Activated naive CD4-positive, alpha-beta T cell treated with anti-CD3 and anti-CD28 coated beads, Interleukin-2, amount 10 ng/mL, durations not matched to agents 7 days and 5 days (primary cell): ENCODE measurements at regions of chr6 and their contacts with region 1.

Region 1: DNA sequence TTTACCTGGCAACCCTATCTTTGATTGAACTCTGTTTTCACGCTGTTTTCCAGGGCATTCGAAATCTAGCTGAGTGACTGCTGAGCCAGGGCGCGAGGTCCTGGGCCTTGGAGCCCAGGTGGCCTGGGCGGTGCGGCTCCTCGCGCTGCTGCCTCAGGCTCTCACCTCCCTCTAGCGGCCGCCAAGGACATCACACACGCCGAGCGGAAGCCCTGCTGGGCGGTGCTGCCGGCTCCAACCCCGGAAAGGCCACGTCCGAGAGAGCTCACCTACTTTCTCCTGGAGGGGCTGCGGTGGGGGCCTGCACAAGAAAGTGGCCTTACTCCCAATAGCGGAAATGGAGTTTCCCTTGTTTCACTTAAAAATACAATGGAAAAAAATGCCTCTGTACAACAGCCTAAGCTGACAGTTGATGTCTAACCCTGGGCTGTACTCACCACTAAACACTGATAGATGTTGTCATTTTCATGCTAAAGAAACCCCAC is 77.7 kb downstream of the ELOVL4 start:
- DNase-seq: peak; percentile 86
- H3K4me3 Mint-ChIP-seq: no peak overlapping the region
- H3K27ac Mint-ChIP-seq: peak overlapping the region; percentile 42
- H3K4me1 Mint-ChIP-seq: peaks cover 12% of the 10 kb centered on the region
- H3K27me3 Mint-ChIP-seq: peaks cover 12% of the 10 kb centered on the region

Region 2: DNA sequence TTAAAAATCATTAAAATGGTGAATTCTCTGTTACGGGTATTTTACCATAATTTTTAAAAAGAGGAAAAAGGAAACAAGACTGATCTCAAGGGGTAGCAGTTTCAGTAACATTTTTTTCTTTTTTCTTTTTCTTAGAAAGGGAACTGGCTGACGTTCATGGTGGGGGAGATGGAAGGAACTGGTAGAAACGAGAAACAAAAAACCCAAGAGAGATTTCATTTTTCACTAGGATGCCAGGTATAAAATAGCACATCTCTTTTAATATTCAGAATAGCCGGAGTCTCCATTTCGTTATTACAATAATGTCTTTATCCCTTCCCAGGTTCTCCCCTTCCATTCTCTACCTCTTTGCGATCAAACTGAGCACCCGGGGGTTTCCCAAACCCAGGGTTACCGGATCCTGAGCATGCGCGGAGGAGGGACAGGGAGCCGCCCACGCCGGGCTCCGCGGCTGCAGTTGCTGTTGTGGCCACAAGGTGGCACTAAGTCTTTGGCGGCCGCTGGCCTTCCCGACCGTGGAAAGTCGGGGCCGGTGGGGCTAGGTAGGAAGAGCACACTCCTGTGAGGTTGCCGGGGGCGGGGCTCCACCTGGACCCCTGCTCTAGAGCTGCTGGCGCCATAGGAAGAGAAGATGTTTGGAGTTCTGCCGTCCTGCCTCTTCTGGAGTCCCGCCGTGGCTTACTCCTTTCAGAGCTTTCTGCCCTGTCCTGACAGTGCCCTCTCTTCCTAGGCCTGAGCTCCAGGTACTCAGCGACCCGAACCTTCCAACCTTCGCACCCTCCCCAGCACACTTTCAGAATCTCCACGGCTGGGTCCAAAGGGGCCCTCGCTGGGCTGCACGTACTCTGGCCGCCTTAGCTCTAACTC is 91.7 kb before region 1 on chr6:
- CTCF ChIA-PET with region 1: interaction called, 17 read pairs
- DNase-seq: peak; percentile 85
- H3K4me3 Mint-ChIP-seq: peak overlapping the region; percentile 62
- H3K27ac Mint-ChIP-seq: no peak overlapping the region
- H3K4me1 Mint-ChIP-seq: peaks cover 9% of the 10 kb centered on the region
- H3K27me3 Mint-ChIP-seq: peaks cover 4% of the 10 kb centered on the region